ENCODE measurements at regions of chr11 and their contacts with region 1.

Region 1: GRCh38 chr11:35391922-35392813 is 27.2 kb downstream of the SLC1A2 start:
- DNase-seq: peak; percentile 82 to 92
- H3K4me3 ChIP-seq: peak overlapping the region in 2 of 4 donors; percentile 11 to 17
- H3K27ac ChIP-seq: peak overlapping the region; percentile 52 to 80 (median 75)
- H3K4me1 ChIP-seq: peaks cover 28 to 40% (median 28%) of the 10 kb centered on the region in 4 donors
- H3K27me3 ChIP-seq: no peaks in the 10 kb centered on the region
- CTCF ChIP-seq: peak in 5 of 7 experiments; percentile 63 to 92 (median 87)
- EP300 ChIP-seq: no peak
- POLR2A ChIP-seq: no peak

Region 2: DNA sequence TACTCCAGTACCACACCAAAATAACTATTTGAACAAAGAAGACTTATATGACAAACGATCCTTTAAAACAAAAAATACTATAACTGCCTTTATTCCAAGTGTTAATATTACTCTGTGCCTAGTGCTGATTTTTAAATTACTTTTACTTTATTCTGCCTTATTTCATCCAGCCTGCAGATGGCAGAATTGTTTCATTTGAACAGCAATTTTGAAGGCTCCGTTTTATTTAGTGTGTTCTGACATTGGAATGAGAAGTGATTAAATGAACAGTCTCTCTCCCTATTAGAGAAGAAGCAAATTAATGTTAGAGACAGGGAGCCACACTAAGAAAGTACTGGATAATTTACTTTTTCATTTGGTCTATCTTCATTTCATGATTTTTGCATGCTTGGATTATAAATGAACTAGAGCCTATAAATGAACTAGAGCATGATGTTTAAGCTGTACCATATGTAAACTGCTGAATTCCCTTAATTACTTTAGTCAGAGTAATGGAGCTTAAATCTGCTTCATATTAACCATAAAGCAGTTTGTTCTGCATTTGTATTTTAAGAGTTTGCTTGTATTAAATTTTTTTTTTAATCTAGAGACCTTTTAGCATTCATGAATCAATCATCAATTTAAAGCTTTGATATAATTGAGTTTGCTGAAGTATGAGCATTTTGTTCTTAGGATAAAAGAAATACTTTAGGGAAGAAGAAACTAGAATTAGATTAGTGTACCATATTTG is 465.9 kb before region 1 on chr11:
- intact Hi-C with region 1: loop called (anchors 5 kb)
- DNase-seq: peak in 1 of 2 donors; percentile 79
- H3K4me3 ChIP-seq: no peak overlapping the region
- H3K27ac ChIP-seq: no peak overlapping the region
- H3K4me1 ChIP-seq: peaks cover 30 to 91% (median 66%) of the 10 kb centered on the region in 4 donors
- H3K27me3 ChIP-seq: no peaks in the 10 kb centered on the region
- CTCF ChIP-seq: peak in 5 of 7 experiments; percentile 39 to 77 (median 64)
- EP300 ChIP-seq: no peak
- POLR2A ChIP-seq: no peak

Region 3: GRCh38 chr11:34997952-34998528 is 394.1 kb before region 1 on chr11:
- intact Hi-C with region 1: loop called (anchors 10 kb)
- DNase-seq: no peak
- H3K4me3 ChIP-seq: no peak overlapping the region
- H3K27ac ChIP-seq: peak overlapping the region in 1 of 5 donors; percentile 23
- H3K4me1 ChIP-seq: peaks cover 0 to 20% (median 11%) of the 10 kb centered on the region in 4 donors
- H3K27me3 ChIP-seq: no peaks in the 10 kb centered on the region
- CTCF ChIP-seq: peak in 5 of 7 experiments; percentile 25 to 57 (median 39)
- EP300 ChIP-seq: no peak
- POLR2A ChIP-seq: no peak

Measured in stomach (tissue), 19 donors.